ENCODE measurements at regions of chr13 and their contacts with region 1.

Region 1: GRCh38 chr13:44052780-44053184 is 173.1 kb downstream of the LACC1 start:
- DNase-seq: peak; percentile 29
- ATAC-seq: peak; percentile 72
- H3K4me3 Mint-ChIP-seq: no peak overlapping the region; the same call in 1 of the 2 replicates
- H3K27ac Mint-ChIP-seq: peak overlapping the region; percentile 10; the same call in 1 of the 2 replicates
- H3K4me1 Mint-ChIP-seq: peaks cover 26% of the 10 kb centered on the region
- H3K27me3 Mint-ChIP-seq: peaks cover 8% of the 10 kb centered on the region
- CTCF ChIP-seq: no peak

Region 2: GRCh38 chr13:43908156-43909131 is 144.3 kb before region 1 on chr13:
- CTCF ChIA-PET with region 1: interaction called, 13 read pairs
- POLR2A ChIA-PET with region 1: no interaction called
- DNase-seq: no peak
- ATAC-seq: no peak
- H3K4me3 Mint-ChIP-seq: no peak overlapping the region
- H3K27ac Mint-ChIP-seq: no peak overlapping the region
- H3K4me1 Mint-ChIP-seq: no peaks in the 10 kb centered on the region
- H3K27me3 Mint-ChIP-seq: no peaks in the 10 kb centered on the region
- CTCF ChIP-seq: peak; percentile 44; the same call in 1 of the 2 replicates

Region 3: GRCh38 chr13:44141725-44142539 is 89.2 kb after region 1 on chr13:
- CTCF ChIA-PET with region 1: interaction called, 10 read pairs
- POLR2A ChIA-PET with region 1: no interaction called
- DNase-seq: peak; percentile 99
- ATAC-seq: peak; percentile 99
- H3K4me3 Mint-ChIP-seq: peak overlapping the region; percentile 97
- H3K27ac Mint-ChIP-seq: peak overlapping the region; percentile 98
- H3K4me1 Mint-ChIP-seq: peaks cover 33% of the 10 kb centered on the region
- H3K27me3 Mint-ChIP-seq: no peaks in the 10 kb centered on the region; the same call in 1 of the 2 replicates
- CTCF ChIP-seq: no peak

Region 4: GRCh38 chr13:44259045-44260027 is 206.6 kb after region 1 on chr13:
- CTCF ChIA-PET with region 1: no interaction called
- POLR2A ChIA-PET with region 1: no interaction called
- DNase-seq: no peak
- ATAC-seq: no peak
- H3K4me3 Mint-ChIP-seq: no peak overlapping the region
- H3K27ac Mint-ChIP-seq: no peak overlapping the region
- H3K4me1 Mint-ChIP-seq: peaks cover 14% of the 10 kb centered on the region
- H3K27me3 Mint-ChIP-seq: no peaks in the 10 kb centered on the region
- CTCF ChIP-seq: no peak

Measured in WTC11 (cell line).